ENCODE measurements at regions of chr14 and their contacts with region 1.

Region 1: GRCh38 chr14:49879683-49880204 is 13.1 kb upstream of the ARF6 start:
- DNase-seq: peak; percentile 67
- ATAC-seq: peak; percentile 85
- H3K4me3 Mint-ChIP-seq: no peak overlapping the region
- H3K27ac Mint-ChIP-seq: no peak overlapping the region
- H3K4me1 Mint-ChIP-seq: peaks cover 36% of the 10 kb centered on the region
- H3K27me3 Mint-ChIP-seq: no peaks in the 10 kb centered on the region
- CTCF ChIP-seq: peak; percentile 67

Region 2: GRCh38 chr14:49862089-49862673 is 17.6 kb before region 1 on chr14:
- CTCF ChIA-PET with region 1: interaction called, 47 read pairs
- POLR2A ChIA-PET with region 1: interaction called, 3 read pairs
- DNase-seq: peak; percentile 80
- ATAC-seq: peak; percentile 42
- H3K4me3 Mint-ChIP-seq: no peak overlapping the region
- H3K27ac Mint-ChIP-seq: no peak overlapping the region
- H3K4me1 Mint-ChIP-seq: peaks cover 12% of the 10 kb centered on the region
- H3K27me3 Mint-ChIP-seq: peaks cover 3% of the 10 kb centered on the region; the same call in 1 of the 2 replicates
- CTCF ChIP-seq: peak; percentile 99

Region 3: GRCh38 chr14:49867831-49868723 is 11.7 kb before region 1 on chr14:
- CTCF ChIA-PET with region 1: interaction called, 47 read pairs
- POLR2A ChIA-PET with region 1: interaction called, 5 read pairs
- DNase-seq: peak; percentile 96
- ATAC-seq: peak; percentile 90
- H3K4me3 Mint-ChIP-seq: peak overlapping the region; percentile 97
- H3K27ac Mint-ChIP-seq: peak overlapping the region; percentile 98
- H3K4me1 Mint-ChIP-seq: peaks cover 11% of the 10 kb centered on the region
- H3K27me3 Mint-ChIP-seq: 0 out of 2 replicates have a peak, but pooled peaks cover 3% of the 10 kb centered on the region
- CTCF ChIP-seq: no peak

Region 4: GRCh38 chr14:49892636-49893308 is 13.0 kb after region 1 on chr14 and contains the start of gene ARF6:
- CTCF ChIA-PET with region 1: interaction called, 24 read pairs
- POLR2A ChIA-PET with region 1: interaction called, 4 read pairs
- DNase-seq: peak; percentile 97
- ATAC-seq: peak; percentile 95
- H3K4me3 Mint-ChIP-seq: peak within 1 kb of the TSS; percentile 96
- H3K27ac Mint-ChIP-seq: peak within 1 kb of the TSS; percentile 100
- H3K4me1 Mint-ChIP-seq: peaks cover 36% of the 10 kb centered on the region
- H3K27me3 Mint-ChIP-seq: no peaks in the 10 kb centered on the region
- CTCF ChIP-seq: no peak
- total RNA-seq, gene ARF6: 50.9 to 55.9 TPM (median 51.9 TPM) in 3 replicates

Region 5: GRCh38 chr14:50060871-50061663 is 181.3 kb after region 1 on chr14:
- CTCF ChIA-PET with region 1: interaction called, 15 read pairs
- POLR2A ChIA-PET with region 1: no interaction called
- DNase-seq: no peak
- ATAC-seq: peak; percentile 48
- H3K4me3 Mint-ChIP-seq: no peak overlapping the region
- H3K27ac Mint-ChIP-seq: peak overlapping the region; percentile 20; the same call in 1 of the 2 replicates
- H3K4me1 Mint-ChIP-seq: peaks cover 32% of the 10 kb centered on the region
- H3K27me3 Mint-ChIP-seq: no peaks in the 10 kb centered on the region
- CTCF ChIP-seq: 0 out of 2 replicates have a peak, but pooled peaks have one; percentile 19

Region 6: GRCh38 chr14:50093496-50093895 is 213.8 kb after region 1 on chr14:
- CTCF ChIA-PET with region 1: interaction called, 11 read pairs
- POLR2A ChIA-PET with region 1: no interaction called
- DNase-seq: no peak
- ATAC-seq: no peak
- H3K4me3 Mint-ChIP-seq: no peak overlapping the region
- H3K27ac Mint-ChIP-seq: peak overlapping the region; percentile 61; the same call in 1 of the 2 replicates
- H3K4me1 Mint-ChIP-seq: peaks cover 18% of the 10 kb centered on the region
- H3K27me3 Mint-ChIP-seq: no peaks in the 10 kb centered on the region
- CTCF ChIP-seq: no peak

Region 7: GRCh38 chr14:50109342-50109741 is 229.6 kb after region 1 on chr14:
- CTCF ChIA-PET with region 1: interaction called, 14 read pairs
- POLR2A ChIA-PET with region 1: no interaction called
- DNase-seq: no peak
- ATAC-seq: 0 out of 2 replicates have a peak, but pooled peaks have one; percentile 11
- H3K4me3 Mint-ChIP-seq: no peak overlapping the region
- H3K27ac Mint-ChIP-seq: no peak overlapping the region
- H3K4me1 Mint-ChIP-seq: peaks cover 24% of the 10 kb centered on the region
- H3K27me3 Mint-ChIP-seq: no peaks in the 10 kb centered on the region
- CTCF ChIP-seq: no peak